Activated CD8-positive, alpha-beta T cell treated with anti-CD3 and anti-CD28 coated beads, Interleukin-2, amount 10 ng/mL, durations not matched to agents 7 days and 5 days (primary cell): ENCODE measurements at regions of chr15 and their contacts with region 1.

Region 1: DNA sequence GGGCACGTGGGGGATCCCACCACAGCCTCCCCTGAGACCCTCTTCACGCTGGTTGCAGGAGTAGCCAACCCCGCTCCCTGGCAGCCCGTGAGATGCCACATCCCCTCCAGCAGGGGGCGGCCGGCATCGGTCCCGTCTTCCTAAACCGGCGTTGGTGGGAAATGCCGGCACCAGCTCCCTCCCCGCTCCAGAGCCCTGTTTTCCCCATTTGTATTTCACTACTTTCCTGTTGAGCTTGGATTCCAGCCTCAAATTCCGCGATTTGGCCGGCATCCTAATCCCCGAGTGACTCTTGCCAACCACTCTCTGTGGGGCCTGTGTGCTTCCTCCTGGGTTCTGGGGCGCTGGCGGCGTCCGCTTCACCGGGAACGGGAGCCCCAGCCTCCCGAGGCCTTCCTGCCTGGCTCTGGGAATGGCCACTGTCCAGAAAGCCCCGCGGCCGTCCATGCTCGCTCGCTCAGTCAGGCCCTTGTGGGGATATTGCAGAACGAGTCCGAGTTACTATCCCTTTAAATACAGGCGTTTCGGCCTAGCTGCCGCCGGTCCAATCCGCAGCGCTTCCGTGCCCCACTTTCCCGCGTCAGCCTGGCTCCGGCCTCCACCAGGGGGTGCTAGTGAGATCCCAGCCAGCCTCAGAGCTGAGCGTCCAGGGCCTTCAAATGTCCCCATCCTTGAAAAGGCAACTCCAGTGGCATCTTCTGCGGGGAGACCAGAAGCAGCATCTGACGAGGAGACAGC is 8.1 kb upstream of the ADAMTS17 start:
- DNase-seq: peak; percentile 91
- ATAC-seq: peak; percentile 98
- H3K4me3 Mint-ChIP-seq: peak overlapping the region; percentile 83
- H3K27ac Mint-ChIP-seq: peak overlapping the region; percentile 88
- H3K4me1 Mint-ChIP-seq: peaks cover 9% of the 10 kb centered on the region
- H3K27me3 Mint-ChIP-seq: peaks cover 9% of the 10 kb centered on the region

Region 2: GRCh38 chr15:99928429-99928981 is 421.4 kb before region 1 on chr15:
- CTCF ChIA-PET with region 1: interaction called, 20 read pairs
- POLR2A ChIA-PET with region 1: no interaction called
- DNase-seq: peak; percentile 89
- ATAC-seq: peak; percentile 95
- H3K4me3 Mint-ChIP-seq: peak overlapping the region; percentile 82
- H3K27ac Mint-ChIP-seq: peak overlapping the region; percentile 80
- H3K4me1 Mint-ChIP-seq: peaks cover 11% of the 10 kb centered on the region
- H3K27me3 Mint-ChIP-seq: peaks cover 26% of the 10 kb centered on the region

Region 3: GRCh38 chr15:100318884-100319283 is 31.0 kb before region 1 on chr15:
- CTCF ChIA-PET with region 1: no interaction called
- POLR2A ChIA-PET with region 1: no interaction called
- DNase-seq: no peak
- ATAC-seq: no peak
- H3K4me3 Mint-ChIP-seq: no peak overlapping the region
- H3K27ac Mint-ChIP-seq: no peak overlapping the region
- H3K4me1 Mint-ChIP-seq: no peaks in the 10 kb centered on the region
- H3K27me3 Mint-ChIP-seq: no peaks in the 10 kb centered on the region

Region 4: DNA sequence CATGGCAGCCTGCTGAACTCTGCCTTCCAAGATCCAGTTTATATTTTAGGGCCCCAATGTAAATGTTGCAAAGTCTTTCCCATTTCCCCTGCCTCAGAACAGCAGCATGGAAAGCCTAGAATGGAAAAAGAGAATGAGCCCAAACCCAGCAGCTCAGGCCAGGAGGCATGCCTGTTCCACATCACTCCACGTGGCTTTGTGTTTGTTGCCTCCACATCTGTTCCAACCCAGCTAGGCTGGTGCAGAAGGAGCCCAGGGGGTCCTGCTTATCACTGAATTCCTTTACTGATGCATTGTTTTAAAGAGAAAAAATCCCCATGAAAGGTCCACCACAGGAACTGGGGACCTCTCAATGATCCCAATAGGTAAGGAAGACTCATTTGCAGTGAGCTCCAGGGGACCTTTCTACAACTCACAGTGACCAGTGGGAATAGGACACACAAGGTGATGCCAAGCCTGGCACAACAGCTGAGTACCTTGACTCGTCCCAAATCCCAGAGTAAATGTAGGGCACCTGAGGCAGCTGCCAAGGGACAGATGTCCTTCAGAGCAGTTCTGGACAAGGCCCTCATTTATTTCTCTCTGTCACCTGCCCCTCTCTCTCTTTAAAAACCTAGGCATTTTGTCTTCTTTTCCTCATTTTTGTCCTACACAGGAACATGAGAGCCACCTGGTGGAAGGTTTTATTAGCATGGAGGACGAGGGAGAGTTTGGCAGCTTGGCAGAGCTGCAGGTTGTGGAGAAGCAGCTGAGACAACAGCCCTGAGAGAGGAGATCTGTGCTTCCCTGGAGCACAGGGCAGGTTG is 33.6 kb after region 1 on chr15:
- CTCF ChIA-PET with region 1: interaction called, 26 read pairs
- POLR2A ChIA-PET with region 1: no interaction called
- DNase-seq: no peak
- ATAC-seq: no peak
- H3K4me3 Mint-ChIP-seq: no peak overlapping the region
- H3K27ac Mint-ChIP-seq: no peak overlapping the region
- H3K4me1 Mint-ChIP-seq: no peaks in the 10 kb centered on the region
- H3K27me3 Mint-ChIP-seq: no peaks in the 10 kb centered on the region

Region 5: GRCh38 chr15:100559330-100559729 is 209.5 kb after region 1 on chr15:
- CTCF ChIA-PET with region 1: interaction called, 14 read pairs
- POLR2A ChIA-PET with region 1: no interaction called
- DNase-seq: no peak
- ATAC-seq: no peak
- H3K4me3 Mint-ChIP-seq: no peak overlapping the region
- H3K27ac Mint-ChIP-seq: no peak overlapping the region
- H3K4me1 Mint-ChIP-seq: no peaks in the 10 kb centered on the region
- H3K27me3 Mint-ChIP-seq: no peaks in the 10 kb centered on the region

Region 6: GRCh38 chr15:100596792-100597191 is 246.9 kb after region 1 on chr15:
- CTCF ChIA-PET with region 1: interaction called, 54 read pairs
- POLR2A ChIA-PET with region 1: interaction called, 14 read pairs
- DNase-seq: peak; percentile 98
- ATAC-seq: peak; percentile 87
- H3K4me3 Mint-ChIP-seq: peak overlapping the region; percentile 72
- H3K27ac Mint-ChIP-seq: peak overlapping the region; percentile 99
- H3K4me1 Mint-ChIP-seq: peaks cover 77% of the 10 kb centered on the region
- H3K27me3 Mint-ChIP-seq: no peaks in the 10 kb centered on the region

Region 7: DNA sequence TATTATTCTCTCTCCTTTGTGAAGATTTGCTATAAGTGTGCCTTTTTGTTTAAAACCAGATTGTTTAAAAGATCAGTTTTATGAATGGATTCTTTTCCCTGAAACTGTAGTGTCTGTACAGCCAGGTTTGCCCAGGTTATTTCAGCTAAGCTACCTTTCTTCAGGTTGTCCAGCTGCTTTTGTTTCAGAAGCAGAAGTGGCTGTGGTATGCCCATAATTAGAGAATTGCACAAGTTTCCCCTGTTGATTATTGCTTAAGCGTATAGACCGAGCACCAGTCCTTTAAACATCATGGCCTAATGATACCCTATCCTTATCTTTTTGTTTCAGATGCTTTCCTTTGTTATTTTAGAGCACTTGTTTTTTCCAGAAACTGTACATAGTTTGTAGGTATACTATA is 262.7 kb after region 1 on chr15:
- CTCF ChIA-PET with region 1: interaction called, 19 read pairs
- POLR2A ChIA-PET with region 1: no interaction called
- DNase-seq: no peak
- ATAC-seq: no peak
- H3K4me3 Mint-ChIP-seq: no peak overlapping the region
- H3K27ac Mint-ChIP-seq: no peak overlapping the region
- H3K4me1 Mint-ChIP-seq: no peaks in the 10 kb centered on the region
- H3K27me3 Mint-ChIP-seq: no peaks in the 10 kb centered on the region

Region 8: DNA sequence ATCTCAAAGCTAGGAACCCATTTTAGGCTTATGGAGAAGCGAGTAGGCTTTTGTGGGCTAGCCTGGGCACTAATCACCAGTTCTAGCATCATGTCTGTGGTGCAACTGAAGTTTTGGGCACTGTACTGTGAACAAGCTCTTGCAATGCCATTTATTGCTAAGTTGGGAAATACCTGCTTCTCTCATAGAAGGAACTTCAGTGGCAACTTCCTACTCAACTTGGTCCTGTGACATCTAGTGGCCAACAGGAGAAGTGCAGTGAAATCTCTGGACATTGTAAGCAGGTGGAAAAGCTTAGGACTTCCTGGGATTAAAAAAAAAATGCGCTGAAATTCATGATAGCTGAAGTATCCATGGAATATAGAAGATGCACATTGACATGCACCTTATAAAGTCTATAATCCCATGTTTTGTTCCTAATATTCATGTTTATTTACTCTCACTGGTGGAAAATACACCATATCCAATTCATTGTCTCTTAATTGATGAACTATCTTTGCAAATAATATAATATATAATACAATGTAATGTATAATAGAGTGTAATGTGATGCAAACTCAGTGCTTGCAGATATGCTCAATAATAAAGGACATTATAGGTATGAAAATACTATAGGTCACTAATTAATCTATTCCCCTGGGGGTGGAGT is 523.3 kb after region 1 on chr15:
- CTCF ChIA-PET with region 1: interaction called, 18 read pairs
- POLR2A ChIA-PET with region 1: no interaction called
- DNase-seq: peak; percentile 57
- ATAC-seq: no peak
- H3K4me3 Mint-ChIP-seq: no peak overlapping the region
- H3K27ac Mint-ChIP-seq: no peak overlapping the region
- H3K4me1 Mint-ChIP-seq: no peaks in the 10 kb centered on the region
- H3K27me3 Mint-ChIP-seq: peaks cover 36% of the 10 kb centered on the region